GM12878 (cell line): ENCODE measurements at regions of chr17 and their contacts with region 1.

Region 1: GRCh38 chr17:16973760-16974540 is 2.0 kb upstream of the TNFRSF13B start:
- DNase-seq: peak; percentile 88
- ATAC-seq: peak; percentile 15
- H3K4me3 ChIP-seq: peak overlapping the region; percentile 4; the same call in 1 of the 2 replicates
- H3K27ac ChIP-seq: peak overlapping the region; percentile 92
- H3K4me1 ChIP-seq: peaks cover 58% of the 10 kb centered on the region
- H3K27me3 ChIP-seq: no peaks in the 10 kb centered on the region
- CTCF ChIP-seq: no peak
- EP300 ChIP-seq: peak in 1 of 2 experiments; percentile 56; a peak in 1 of 4 replicates
- POLR2A ChIP-seq: peak; percentile 52; the same call in 1 of the 2 replicates
- RAD21 ChIP-seq: peak; percentile 9; the same call in 1 of the 2 replicates

Region 2: DNA sequence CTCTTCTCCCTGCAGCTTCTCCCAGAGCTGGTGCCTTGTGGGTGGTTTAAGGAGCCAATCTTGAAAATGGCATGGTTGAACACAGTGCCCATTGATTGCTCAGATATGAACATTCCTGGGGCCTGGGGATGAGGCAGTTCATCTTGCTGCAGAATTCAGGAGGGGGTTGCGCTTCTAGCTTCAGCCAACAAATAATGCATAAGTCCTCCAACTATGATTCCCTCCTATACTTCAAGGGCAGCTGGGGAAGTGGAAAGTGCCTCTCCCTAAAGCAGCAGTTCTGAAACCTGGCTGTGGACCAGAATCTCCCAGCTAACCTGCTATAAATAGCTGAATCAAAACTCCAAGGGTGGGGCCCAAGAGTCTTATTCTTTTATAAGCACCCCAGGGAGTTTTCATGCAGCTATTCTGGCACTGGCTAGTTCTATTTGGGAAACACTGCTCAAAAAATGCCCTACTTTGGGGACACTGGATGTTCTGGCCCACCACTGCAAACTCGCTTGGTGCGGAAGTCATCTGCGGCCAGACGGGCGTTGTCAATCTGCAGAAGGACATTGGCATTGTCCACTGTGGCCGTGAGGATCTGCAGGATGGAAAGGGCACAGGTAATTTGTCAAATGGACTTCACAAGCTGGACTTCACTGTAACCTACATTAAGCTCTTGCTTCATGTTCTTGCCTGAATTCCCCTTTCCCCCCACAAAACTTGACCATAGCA is 153.6 kb before region 1 on chr17:
- CTCF ChIA-PET with region 1: no interaction called
- POLR2A ChIA-PET with region 1: no interaction called
- RAD21 ChIA-PET with region 1: no interaction called
- SMC1A ChIA-PET with region 1: no interaction called
- in situ Hi-C with region 1: no loop called
- intact Hi-C with region 1: no loop called
- DNase-seq: no peak
- ATAC-seq: no peak
- H3K4me3 ChIP-seq: no peak overlapping the region
- H3K27ac ChIP-seq: no peak overlapping the region
- H3K4me1 ChIP-seq: no peaks in the 10 kb centered on the region
- H3K27me3 ChIP-seq: no peaks in the 10 kb centered on the region
- CTCF ChIP-seq: no peak
- EP300 ChIP-seq: no peak
- POLR2A ChIP-seq: no peak
- RAD21 ChIP-seq: no peak

Region 3: GRCh38 chr17:16915752-16916556 is 58.0 kb before region 1 on chr17:
- CTCF ChIA-PET with region 1: interaction called, 7 read pairs
- POLR2A ChIA-PET with region 1: interaction called, 4 read pairs
- RAD21 ChIA-PET with region 1: interaction called, 3 read pairs
- SMC1A ChIA-PET with region 1: interaction called, 11 read pairs
- in situ Hi-C with region 1: no loop called
- intact Hi-C with region 1: no loop called
- DNase-seq: peak; percentile 17
- ATAC-seq: peak; percentile 95
- H3K4me3 ChIP-seq: no peak overlapping the region
- H3K27ac ChIP-seq: no peak overlapping the region
- H3K4me1 ChIP-seq: peaks cover 8% of the 10 kb centered on the region
- H3K27me3 ChIP-seq: 0 out of 4 replicates have a peak, but pooled peaks cover 0 to 1% of the 10 kb centered on the region in 2 experiments
- CTCF ChIP-seq: peak; percentile 69 to 86 (median 72)
- EP300 ChIP-seq: no peak
- POLR2A ChIP-seq: no peak
- RAD21 ChIP-seq: peak; percentile 65

Region 4: GRCh38 chr17:17028059-17028877 is 54.3 kb after region 1 on chr17:
- CTCF ChIA-PET with region 1: no interaction called
- POLR2A ChIA-PET with region 1: no interaction called
- RAD21 ChIA-PET with region 1: no interaction called
- SMC1A ChIA-PET with region 1: no interaction called
- in situ Hi-C with region 1: no loop called
- intact Hi-C with region 1: no loop called
- DNase-seq: no peak
- ATAC-seq: peak; percentile 44
- H3K4me3 ChIP-seq: no peak overlapping the region
- H3K27ac ChIP-seq: no peak overlapping the region
- H3K4me1 ChIP-seq: no peaks in the 10 kb centered on the region
- H3K27me3 ChIP-seq: no peaks in the 10 kb centered on the region
- CTCF ChIP-seq: no peak
- EP300 ChIP-seq: no peak
- POLR2A ChIP-seq: no peak
- RAD21 ChIP-seq: no peak